Activated CD4-positive, alpha-beta memory T cell treated with anti-CD3 and anti-CD28 coated beads, Interleukin-2, amount 10 ng/mL, durations not matched to agents 7 days and 5 days (primary cell): ENCODE measurements at regions of chr20 and their contacts with region 1.

Region 1: GRCh38 chr20:25399037-25399430 is 8.4 kb upstream of the ABHD12 start:
- DNase-seq: no peak
- H3K4me3 Mint-ChIP-seq: no peak overlapping the region
- H3K27ac Mint-ChIP-seq: no peak overlapping the region
- H3K4me1 Mint-ChIP-seq: peaks cover 3% of the 10 kb centered on the region
- H3K27me3 Mint-ChIP-seq: peaks cover 9% of the 10 kb centered on the region

Region 2: GRCh38 chr20:25294459-25295385 is 104.3 kb before region 1 on chr20:
- CTCF ChIA-PET with region 1: interaction called, 33 read pairs
- POLR2A ChIA-PET with region 1: no interaction called
- DNase-seq: peak; percentile 48
- H3K4me3 Mint-ChIP-seq: no peak overlapping the region
- H3K27ac Mint-ChIP-seq: no peak overlapping the region
- H3K4me1 Mint-ChIP-seq: peaks cover 11% of the 10 kb centered on the region
- H3K27me3 Mint-ChIP-seq: no peaks in the 10 kb centered on the region

Region 3: GRCh38 chr20:25310268-25310920 is 88.6 kb before region 1 on chr20:
- CTCF ChIA-PET with region 1: interaction called, 22 read pairs
- POLR2A ChIA-PET with region 1: no interaction called
- DNase-seq: peak; percentile 76
- H3K4me3 Mint-ChIP-seq: peak overlapping the region; percentile 72
- H3K27ac Mint-ChIP-seq: peak overlapping the region; percentile 98
- H3K4me1 Mint-ChIP-seq: peaks cover 43% of the 10 kb centered on the region
- H3K27me3 Mint-ChIP-seq: no peaks in the 10 kb centered on the region